Panc1 (cell line): ENCODE measurements at regions of chr5 and their contacts with region 1.

Region 1: DNA sequence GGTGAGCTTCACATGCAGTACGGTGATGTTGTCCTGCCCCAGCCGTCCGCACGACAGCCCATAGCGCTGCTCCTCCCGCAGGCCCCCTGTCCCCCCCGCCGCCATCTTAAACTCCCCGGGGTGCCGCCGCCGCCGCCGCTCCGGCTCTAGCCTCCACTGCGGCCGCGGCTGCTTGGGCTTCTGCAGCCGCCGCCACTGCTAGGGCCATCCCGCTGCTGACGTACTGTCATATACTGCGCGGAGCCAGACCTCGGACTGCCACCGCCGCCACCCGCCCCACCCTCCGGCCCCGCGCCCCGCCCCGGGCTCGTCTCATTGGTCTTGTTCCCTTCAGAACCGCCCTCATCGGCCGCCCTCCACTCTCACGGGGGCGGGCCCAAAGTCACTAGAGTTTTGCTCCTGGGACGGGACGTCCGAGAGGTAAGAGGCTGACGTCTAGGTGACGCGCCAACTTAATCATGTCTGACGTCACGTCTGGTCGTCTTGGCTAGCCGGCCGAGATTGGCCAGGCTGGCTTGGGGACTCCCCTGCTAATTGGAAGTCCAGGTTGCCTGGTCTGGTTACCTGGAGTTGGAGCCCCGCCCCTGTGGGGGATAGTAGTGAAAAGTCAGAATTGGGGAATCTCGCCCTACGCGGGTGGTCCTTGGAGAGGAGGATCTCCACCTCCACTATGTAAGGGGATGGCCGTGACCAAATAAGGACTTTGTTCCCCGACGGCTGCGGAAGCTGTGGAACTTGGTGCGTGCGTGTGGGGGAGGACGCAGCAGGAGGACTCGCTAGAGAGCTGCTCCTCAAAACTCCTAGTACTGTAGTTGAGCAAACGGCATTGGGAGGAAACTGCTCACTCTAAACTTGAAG is at the start of gene ELL2:
- DNase-seq: peak; percentile 98
- ATAC-seq: peak; percentile 91
- H3K4me3 ChIP-seq: peak within 1 kb of the TSS; percentile 98
- H3K27ac ChIP-seq: peak within 1 kb of the TSS; percentile 94
- H3K4me1 ChIP-seq: peaks cover 24% of the 10 kb centered on the region
- H3K27me3 ChIP-seq: no peaks in the 10 kb centered on the region
- CTCF ChIP-seq: no peak
- total RNA-seq, gene ELL2: 68.5 TPM

Region 2: DNA sequence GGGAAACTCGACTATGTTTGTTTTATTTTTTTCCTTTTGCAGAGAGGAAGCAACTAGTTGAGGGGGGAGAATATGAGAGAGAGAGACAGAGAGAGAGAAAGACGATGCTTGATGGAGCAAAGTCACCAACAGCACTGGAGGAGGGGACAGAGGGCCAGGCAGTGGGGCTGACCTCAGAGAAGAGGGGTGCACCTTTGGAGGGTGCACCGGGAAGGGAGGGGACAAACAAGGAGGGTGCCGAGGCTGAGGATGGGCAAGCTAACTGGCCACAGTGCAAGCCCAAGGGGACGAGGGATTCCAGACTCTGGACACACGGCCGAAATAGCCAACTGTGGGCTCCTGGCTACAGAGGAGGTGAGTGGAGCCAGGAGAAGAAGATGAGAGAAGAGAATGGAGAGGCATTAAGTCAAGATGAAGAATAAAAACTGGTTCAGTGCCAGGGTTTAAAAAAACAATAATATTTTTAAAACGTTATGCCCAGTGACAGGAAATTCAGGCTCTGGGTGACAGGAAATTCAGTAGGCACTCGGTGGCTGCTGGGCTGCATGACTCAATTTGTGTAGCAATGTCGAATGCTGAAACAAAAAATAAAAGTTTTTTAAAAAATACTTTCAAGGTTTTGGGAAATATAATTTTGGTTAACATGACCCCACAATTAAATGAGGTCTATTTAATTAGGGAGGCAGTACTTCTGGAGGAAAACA is 126.0 kb before region 1 on chr5:
- CTCF ChIA-PET with region 1: no interaction called
- POLR2A ChIA-PET with region 1: no interaction called
- in situ Hi-C with region 1: no loop called
- intact Hi-C with region 1: no loop called
- DNase-seq: no peak
- ATAC-seq: no peak
- H3K4me3 ChIP-seq: no peak overlapping the region
- H3K27ac ChIP-seq: no peak overlapping the region; the same call in 1 of the 2 replicates
- H3K4me1 ChIP-seq: peaks cover 5% of the 10 kb centered on the region
- H3K27me3 ChIP-seq: no peaks in the 10 kb centered on the region
- CTCF ChIP-seq: no peak

Region 3: GRCh38 chr5:96172436-96172835 is 210.6 kb after region 1 on chr5:
- CTCF ChIA-PET with region 1: no interaction called
- POLR2A ChIA-PET with region 1: no interaction called
- in situ Hi-C with region 1: no loop called
- intact Hi-C with region 1: loop called (anchors 10 kb)
- DNase-seq: no peak
- ATAC-seq: no peak
- H3K4me3 ChIP-seq: no peak overlapping the region
- H3K27ac ChIP-seq: no peak overlapping the region
- H3K4me1 ChIP-seq: no peaks in the 10 kb centered on the region
- H3K27me3 ChIP-seq: no peaks in the 10 kb centered on the region
- CTCF ChIP-seq: no peak

Region 4: DNA sequence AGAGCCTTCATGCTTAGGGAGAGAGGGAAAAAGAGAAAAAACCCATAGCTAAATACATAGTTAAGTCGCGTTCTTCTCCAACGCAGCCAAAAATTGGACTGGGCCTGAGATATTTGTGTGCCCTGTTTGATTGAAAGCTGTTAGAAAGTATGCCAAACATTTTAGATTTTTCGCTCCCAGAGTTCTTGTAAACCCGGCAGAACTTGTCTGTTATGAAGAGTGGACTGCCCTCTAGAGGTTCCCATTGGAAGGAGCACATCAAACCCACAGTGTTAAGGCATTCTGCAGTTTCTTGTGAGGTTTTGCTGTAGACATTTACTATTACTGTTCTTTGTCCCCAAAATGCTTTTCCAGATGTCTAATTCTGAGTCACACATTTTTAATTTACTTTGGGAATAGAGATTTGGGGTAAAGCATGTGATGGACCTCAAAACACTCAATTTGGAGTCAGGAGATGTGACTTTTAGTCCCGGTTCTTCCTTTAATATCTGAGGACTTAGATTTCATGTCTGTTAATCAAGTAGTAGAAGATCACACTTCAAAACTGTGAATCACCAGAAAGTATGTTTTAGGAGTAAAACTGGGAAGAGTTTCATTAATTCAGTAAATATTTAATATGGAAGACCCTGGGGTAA is 374.6 kb after region 1 on chr5:
- CTCF ChIA-PET with region 1: no interaction called
- POLR2A ChIA-PET with region 1: no interaction called
- in situ Hi-C with region 1: no loop called
- intact Hi-C with region 1: loop called (anchors 5 kb)
- DNase-seq: peak; percentile 88
- ATAC-seq: peak; percentile 89
- H3K4me3 ChIP-seq: no peak overlapping the region
- H3K27ac ChIP-seq: peak overlapping the region; percentile 80
- H3K4me1 ChIP-seq: peaks cover 23% of the 10 kb centered on the region
- H3K27me3 ChIP-seq: no peaks in the 10 kb centered on the region
- CTCF ChIP-seq: peak; percentile 88